ENCODE measurements at regions of chr3 and their contacts with region 1.

Region 1: DNA sequence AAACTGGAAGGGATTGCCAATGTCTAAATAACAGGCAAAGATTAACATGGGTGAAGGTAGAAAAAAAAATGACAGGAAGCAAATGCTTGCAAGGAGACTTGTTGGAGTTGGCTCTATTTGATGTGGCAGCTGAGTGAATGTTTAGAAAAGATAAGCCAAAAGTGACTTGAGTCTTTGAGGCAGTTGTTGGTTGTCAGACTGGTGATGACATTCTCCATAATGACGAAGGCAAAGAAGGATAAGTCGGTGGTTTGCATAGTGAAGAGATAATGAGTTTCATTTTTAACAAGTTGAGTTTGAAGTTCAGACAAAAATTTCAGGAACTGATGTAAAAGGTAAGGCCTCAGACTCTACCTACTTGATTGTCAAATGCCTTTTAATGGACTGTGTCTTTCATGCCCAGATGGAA is 704.1 kb upstream of the SGO1 start:
- DNase-seq: no peak
- H3K4me3 ChIP-seq: no peak overlapping the region
- CTCF ChIP-seq: no peak
- POLR2A ChIP-seq: no peak

Region 2: DNA sequence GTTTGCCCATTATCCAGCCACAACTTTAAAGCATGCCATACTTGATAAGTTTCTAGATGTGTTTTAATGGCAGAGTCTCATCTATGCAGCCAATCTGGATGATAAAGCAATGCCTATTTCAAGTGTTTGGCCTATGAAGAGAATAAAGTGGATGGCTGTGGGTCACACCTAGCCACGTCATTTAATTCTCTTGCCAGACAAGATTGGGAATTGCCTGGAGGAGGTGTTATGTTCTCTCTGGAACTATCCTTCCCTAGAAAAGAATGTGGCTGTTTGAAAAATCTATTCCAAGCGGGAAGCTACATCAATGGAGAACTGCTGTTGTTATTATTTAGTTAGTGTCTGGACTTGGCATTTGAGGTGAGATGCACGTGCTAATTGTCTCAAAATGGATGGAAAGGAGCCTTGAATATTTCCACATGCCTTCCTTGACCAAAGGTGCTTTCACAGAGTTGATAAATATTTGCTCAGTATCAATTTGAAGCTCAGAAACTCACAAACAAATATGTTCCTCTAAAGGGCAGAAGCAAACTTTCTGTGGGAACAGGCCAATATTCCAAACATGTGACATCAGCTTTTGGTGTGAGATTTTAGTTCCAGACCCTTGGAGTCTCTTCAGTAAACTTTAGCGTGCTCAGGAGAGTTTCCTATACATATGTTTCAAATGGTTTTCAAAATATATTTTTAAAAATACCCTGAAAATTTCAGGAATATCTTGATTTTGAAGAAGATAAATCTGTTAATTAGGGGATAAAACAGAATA is 193.5 kb before region 1 on chr3:
- intact Hi-C with region 1: loop called (anchors 10 kb)
- DNase-seq: no peak
- H3K4me3 ChIP-seq: no peak overlapping the region
- CTCF ChIP-seq: no peak
- POLR2A ChIP-seq: no peak

Region 3: DNA sequence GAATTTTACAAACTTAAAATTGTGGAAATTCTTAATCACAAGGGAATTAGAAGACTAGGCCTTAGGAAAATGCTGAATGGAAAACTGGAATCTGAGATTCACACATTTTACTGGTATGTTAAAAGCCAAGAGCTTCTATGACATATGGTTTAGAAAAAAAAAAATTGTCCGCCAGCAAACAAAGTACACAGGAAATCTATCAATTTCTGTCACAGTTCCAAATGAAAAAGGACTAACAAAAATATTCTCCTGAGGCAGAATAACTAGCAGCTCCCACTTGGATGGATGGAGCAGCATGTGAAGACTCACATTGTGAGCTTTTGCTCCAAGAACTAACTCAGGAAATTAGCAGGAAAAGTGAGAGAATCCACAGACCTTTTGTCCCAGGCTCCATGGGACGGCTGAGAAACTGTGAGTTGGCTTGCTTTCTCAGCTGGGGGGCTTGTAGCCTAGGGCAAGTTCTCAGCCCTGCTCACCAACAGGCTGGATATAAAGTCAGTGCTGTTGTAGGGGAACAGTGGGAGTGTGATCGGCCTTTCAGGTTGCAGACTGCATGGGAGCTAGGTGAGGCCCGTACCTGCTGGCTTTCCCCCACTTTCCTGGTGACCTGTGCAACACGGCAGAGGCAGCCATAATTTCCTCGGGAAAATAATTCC is 27.0 kb after region 1 on chr3:
- intact Hi-C with region 1: no loop called
- DNase-seq: no peak
- H3K4me3 ChIP-seq: no peak overlapping the region
- CTCF ChIP-seq: no peak
- POLR2A ChIP-seq: no peak

Measured in lower leg skin (tissue), 4 donors.